Heart right ventricle (tissue), 16 donors: ENCODE measurements at regions of chr5 and their contacts with region 1.

Region 1: DNA sequence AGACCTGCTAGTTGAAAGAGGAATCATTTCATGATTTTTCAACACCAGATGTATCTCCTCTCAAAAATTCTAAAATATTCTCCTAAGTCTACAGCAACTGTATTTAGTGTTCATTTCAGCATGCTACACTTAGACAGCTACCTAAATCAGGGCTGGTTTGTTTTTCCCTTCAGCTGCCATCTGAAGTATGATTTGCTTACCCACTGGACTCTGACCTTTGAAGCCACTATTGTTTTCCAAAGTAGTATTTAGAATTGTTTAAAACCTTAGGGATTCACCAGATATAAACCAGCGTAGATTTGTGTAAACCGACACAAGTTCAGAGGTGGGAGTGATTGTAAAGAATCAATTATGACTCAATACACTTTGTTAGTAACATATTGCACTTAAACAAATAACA is 193.1 kb downstream of the ADAMTS6 start:
- DNase-seq: no peak
- ATAC-seq: no peak
- H3K4me3 ChIP-seq: no peak overlapping the region
- H3K27ac ChIP-seq: no peak overlapping the region
- H3K4me1 ChIP-seq: no peaks in the 10 kb centered on the region
- H3K27me3 ChIP-seq: no peaks in the 10 kb centered on the region
- CTCF ChIP-seq: no peak

Region 2: DNA sequence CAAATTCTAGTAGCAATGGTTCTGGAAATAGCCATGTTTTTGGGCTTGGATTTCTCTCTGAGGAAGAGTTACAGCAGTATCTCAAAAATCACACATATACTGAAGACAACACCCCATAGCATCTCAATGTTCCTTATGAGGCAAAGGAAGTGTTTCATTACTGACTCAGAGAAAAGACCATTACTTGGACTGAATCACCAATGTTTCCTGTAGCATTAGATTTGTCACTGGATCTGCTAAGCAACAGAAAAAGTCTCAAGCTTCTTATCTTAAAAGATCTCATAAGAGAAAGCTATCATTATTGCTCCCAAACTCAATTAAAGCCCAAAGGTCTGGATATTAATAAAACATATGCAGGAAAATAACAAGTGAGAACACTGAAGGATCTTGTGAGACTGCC is 79.3 kb before region 1 on chr5:
- intact Hi-C with region 1: no loop called
- DNase-seq: no peak
- ATAC-seq: no peak
- H3K4me3 ChIP-seq: no peak overlapping the region
- H3K27ac ChIP-seq: peak overlapping the region in 1 of 10 donors; percentile 5
- H3K4me1 ChIP-seq: no peaks in the 10 kb centered on the region
- H3K27me3 ChIP-seq: no peaks in the 10 kb centered on the region
- CTCF ChIP-seq: no peak

Region 3: GRCh38 chr5:65341835-65342234 is 53.2 kb after region 1 on chr5:
- intact Hi-C with region 1: loop called in 1 of 10 experiments (anchors 10 kb)
- DNase-seq: no peak
- ATAC-seq: no peak
- H3K4me3 ChIP-seq: no peak overlapping the region
- H3K27ac ChIP-seq: no peak overlapping the region
- H3K4me1 ChIP-seq: no peaks in the 10 kb centered on the region
- H3K27me3 ChIP-seq: no peaks in the 10 kb centered on the region
- CTCF ChIP-seq: no peak